ENCODE measurements at regions of chr3 and their contacts with region 1.

Region 1: DNA sequence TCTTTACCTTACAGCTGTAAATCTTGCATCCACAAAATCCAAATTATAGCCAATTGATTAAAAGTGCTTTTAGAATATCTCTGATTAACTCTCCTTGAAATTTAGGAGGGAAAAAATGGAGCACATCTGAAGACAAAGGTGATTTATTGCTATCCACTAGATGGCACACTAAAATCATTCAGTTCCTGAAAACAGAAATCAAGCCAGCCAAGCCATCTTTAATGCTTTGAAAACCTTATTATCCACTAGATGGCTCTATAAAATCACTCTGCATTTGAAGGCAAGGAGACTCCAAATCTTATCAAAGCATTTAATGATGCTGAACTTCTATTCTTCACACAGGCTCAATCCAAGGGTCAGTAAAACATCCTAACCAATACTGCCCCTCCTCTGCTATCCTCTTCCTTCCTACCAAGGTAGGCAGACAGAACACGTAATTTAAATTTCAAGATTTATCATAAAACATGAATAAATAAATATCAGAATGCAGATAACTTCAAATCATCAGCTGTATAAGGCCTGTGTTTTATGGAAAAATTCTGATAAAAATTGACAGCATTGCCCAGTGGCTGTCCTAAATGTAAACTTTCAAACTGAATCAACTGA is 48.4 kb downstream of the GOLIM4 start:
- DNase-seq: peak; percentile 59
- ATAC-seq: peak; percentile 81
- H3K4me3 ChIP-seq: no peak overlapping the region
- H3K27ac ChIP-seq: no peak overlapping the region
- H3K4me1 ChIP-seq: peaks cover 6% of the 10 kb centered on the region
- H3K27me3 ChIP-seq: no peaks in the 10 kb centered on the region
- CTCF ChIP-seq: peak; percentile 64 to 96 (median 83)
- EP300 ChIP-seq: no peak
- POLR2A ChIP-seq: no peak
- RAD21 ChIP-seq: peak; percentile 97

Region 2: DNA sequence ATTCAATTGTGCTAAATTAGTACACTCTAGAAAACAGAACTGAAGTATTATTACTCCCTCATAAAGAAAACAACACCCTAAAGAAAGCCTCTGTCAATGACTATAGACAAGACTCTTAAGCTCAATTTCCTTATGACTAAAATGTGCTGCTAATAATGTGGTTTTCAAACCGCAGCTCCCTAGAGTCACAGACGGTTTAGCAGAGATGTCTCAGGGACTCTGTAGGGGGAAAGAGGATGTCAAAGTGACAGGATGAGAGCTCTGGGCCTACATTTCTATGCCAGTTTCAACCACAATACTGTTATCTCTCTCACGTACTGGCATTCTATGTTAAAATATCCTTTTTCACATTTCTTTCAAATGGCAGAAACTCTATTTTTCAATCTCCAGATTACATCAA is 355.9 kb before region 1 on chr3:
- CTCF ChIA-PET with region 1: no interaction called
- POLR2A ChIA-PET with region 1: no interaction called
- RAD21 ChIA-PET with region 1: no interaction called
- SMC1A ChIA-PET with region 1: no interaction called
- in situ Hi-C with region 1: no loop called
- intact Hi-C with region 1: loop called (anchors 10 kb)
- DNase-seq: peak; percentile 84
- ATAC-seq: peak; percentile 100
- H3K4me3 ChIP-seq: no peak overlapping the region
- H3K27ac ChIP-seq: no peak overlapping the region; the same call in 1 of the 2 replicates
- H3K4me1 ChIP-seq: peaks cover 10% of the 10 kb centered on the region; the same call in 1 of the 2 replicates
- H3K27me3 ChIP-seq: no peaks in the 10 kb centered on the region
- CTCF ChIP-seq: no peak
- EP300 ChIP-seq: peak; percentile 70 to 80; a peak in 3 of 4 replicates
- POLR2A ChIP-seq: no peak
- RAD21 ChIP-seq: no peak

Region 3: GRCh38 chr3:168088106-168088720 is 40.9 kb after region 1 on chr3:
- CTCF ChIA-PET with region 1: interaction called, 31 read pairs
- POLR2A ChIA-PET with region 1: interaction called, 7 read pairs
- RAD21 ChIA-PET with region 1: interaction called, 26 read pairs
- SMC1A ChIA-PET with region 1: interaction called, 72 read pairs
- in situ Hi-C with region 1: no loop called
- intact Hi-C with region 1: no loop called
- DNase-seq: peak; percentile 35
- ATAC-seq: peak; percentile 75
- H3K4me3 ChIP-seq: peak overlapping the region; percentile 41; the same call in 1 of the 2 replicates
- H3K27ac ChIP-seq: peak overlapping the region; percentile 5
- H3K4me1 ChIP-seq: peaks cover 21% of the 10 kb centered on the region
- H3K27me3 ChIP-seq: no peaks in the 10 kb centered on the region
- CTCF ChIP-seq: peak; percentile 23 to 59 (median 59); a peak in 5 of 6 replicates
- EP300 ChIP-seq: no peak
- POLR2A ChIP-seq: no peak
- RAD21 ChIP-seq: peak; percentile 26; the same call in 1 of the 2 replicates

Region 4: GRCh38 chr3:168100777-168101492 is 53.6 kb after region 1 on chr3:
- CTCF ChIA-PET with region 1: interaction called, 15 read pairs
- POLR2A ChIA-PET with region 1: interaction called, 3 read pairs
- RAD21 ChIA-PET with region 1: interaction called, 6 read pairs
- SMC1A ChIA-PET with region 1: interaction called, 7 read pairs
- in situ Hi-C with region 1: no loop called
- intact Hi-C with region 1: no loop called
- DNase-seq: no peak
- ATAC-seq: no peak
- H3K4me3 ChIP-seq: no peak overlapping the region
- H3K27ac ChIP-seq: no peak overlapping the region
- H3K4me1 ChIP-seq: no peaks in the 10 kb centered on the region
- H3K27me3 ChIP-seq: no peaks in the 10 kb centered on the region
- CTCF ChIP-seq: no peak
- EP300 ChIP-seq: no peak
- POLR2A ChIP-seq: no peak
- RAD21 ChIP-seq: no peak

Region 5: DNA sequence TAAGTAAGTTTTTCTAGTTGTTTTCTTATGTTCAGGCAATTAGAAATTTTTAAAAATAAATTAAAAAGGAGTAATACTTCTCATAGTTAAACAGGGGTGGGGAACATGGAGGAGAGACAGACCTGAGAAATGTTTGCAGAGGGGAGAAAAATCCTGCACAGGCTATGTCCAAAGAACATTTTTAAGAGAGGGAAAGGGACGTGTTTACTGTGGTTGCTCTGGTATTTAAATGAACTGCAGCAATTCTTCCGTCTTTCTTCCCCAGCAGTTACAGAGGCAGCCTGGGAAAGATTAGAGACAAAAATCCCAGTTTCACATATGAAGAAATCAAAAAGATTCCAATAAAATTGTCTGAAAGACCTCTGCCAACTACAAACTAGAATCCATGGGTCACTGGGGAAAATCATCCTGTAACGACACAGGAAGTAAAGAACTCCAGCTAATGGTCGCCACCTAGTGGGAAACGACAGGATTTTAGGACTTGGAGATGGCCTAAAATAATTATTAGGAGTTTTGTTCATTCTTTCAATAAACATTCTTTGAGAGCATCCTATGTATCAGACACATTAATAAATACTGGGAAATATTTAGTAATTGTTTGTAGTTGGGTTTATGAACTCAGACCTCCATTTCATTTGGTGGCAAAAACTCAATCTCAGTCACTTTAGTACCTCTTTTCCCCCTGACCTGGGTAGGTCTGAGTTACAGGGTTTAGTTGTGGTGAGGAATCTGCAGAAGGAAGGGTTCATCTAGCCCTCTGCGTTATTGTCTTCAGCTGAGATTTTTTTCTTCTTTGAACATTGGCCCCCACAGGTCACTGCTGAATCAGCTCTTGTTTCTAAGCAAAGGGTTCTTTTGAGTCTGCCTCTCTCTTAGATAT is 118.3 kb after region 1 on chr3:
- CTCF ChIA-PET with region 1: interaction called, 318 read pairs
- POLR2A ChIA-PET with region 1: no interaction called
- RAD21 ChIA-PET with region 1: interaction called, 76 read pairs
- SMC1A ChIA-PET with region 1: interaction called, 186 read pairs
- in situ Hi-C with region 1: loop called (anchors 5 kb)
- intact Hi-C with region 1: loop called (anchors 1 kb)
- DNase-seq: peak; percentile 47
- ATAC-seq: peak; percentile 87
- H3K4me3 ChIP-seq: no peak overlapping the region
- H3K27ac ChIP-seq: peak overlapping the region; percentile 20; the same call in 1 of the 2 replicates
- H3K4me1 ChIP-seq: no peaks in the 10 kb centered on the region
- H3K27me3 ChIP-seq: no peaks in the 10 kb centered on the region
- CTCF ChIP-seq: peak; percentile 64 to 85 (median 71)
- EP300 ChIP-seq: no peak
- POLR2A ChIP-seq: no peak
- RAD21 ChIP-seq: peak; percentile 96

Region 6: DNA sequence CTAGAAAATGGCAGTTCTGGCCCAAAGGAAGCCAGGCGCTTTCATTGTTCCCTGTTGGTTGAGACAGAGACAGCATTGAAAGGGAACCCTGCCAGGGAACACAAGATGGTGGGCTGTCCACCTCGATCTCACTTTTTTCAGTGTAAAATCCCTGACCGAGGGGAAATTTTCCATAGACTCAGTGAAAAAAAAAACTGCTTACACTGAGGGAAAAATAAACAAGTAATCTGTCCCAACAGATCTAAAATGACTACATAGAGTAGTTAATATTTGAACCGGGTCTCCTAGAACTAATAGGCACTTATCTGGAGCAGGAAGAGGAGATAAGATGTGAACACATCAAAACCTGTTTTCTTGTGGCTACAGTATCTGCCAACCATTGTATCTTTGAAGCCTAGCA is 811.9 kb after region 1 on chr3:
- CTCF ChIA-PET with region 1: no interaction called
- POLR2A ChIA-PET with region 1: no interaction called
- RAD21 ChIA-PET with region 1: no interaction called
- SMC1A ChIA-PET with region 1: no interaction called
- in situ Hi-C with region 1: loop called (anchors 10 kb)
- intact Hi-C with region 1: no loop called
- DNase-seq: no peak
- ATAC-seq: no peak
- H3K4me3 ChIP-seq: no peak overlapping the region
- H3K27ac ChIP-seq: no peak overlapping the region
- H3K4me1 ChIP-seq: no peaks in the 10 kb centered on the region
- H3K27me3 ChIP-seq: no peaks in the 10 kb centered on the region
- CTCF ChIP-seq: no peak
- EP300 ChIP-seq: no peak
- POLR2A ChIP-seq: no peak
- RAD21 ChIP-seq: no peak

Measured in GM12878 (cell line).